ENCODE measurements at regions of chr19 and their contacts with region 1.

Region 1: DNA sequence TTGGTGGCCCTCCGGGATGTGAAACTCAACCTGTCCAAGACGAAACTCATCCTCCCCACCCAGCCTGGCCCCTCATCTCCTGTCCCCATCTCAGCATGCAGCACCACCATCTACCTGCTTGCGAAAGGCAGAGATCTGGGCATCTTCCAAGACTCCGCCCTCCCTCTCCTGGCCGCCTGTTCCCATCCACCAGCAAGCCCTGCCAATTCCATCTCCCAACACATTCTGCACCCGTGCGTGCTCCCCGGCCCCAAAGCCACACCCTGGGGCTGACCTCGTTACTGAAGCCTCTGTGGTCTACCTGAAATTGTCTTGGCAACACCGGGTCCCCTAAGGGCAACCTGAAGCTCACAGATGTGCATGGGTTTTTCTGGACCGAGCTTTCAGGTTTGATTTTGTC is 13.2 kb upstream of the CAMSAP3 start:
- H3K4me3 ChIP-seq: no peak overlapping the region
- H3K27ac ChIP-seq: no peak overlapping the region
- H3K4me1 ChIP-seq: no peaks in the 10 kb centered on the region
- CTCF ChIP-seq: no peak

Region 2: GRCh38 chr19:7318176-7318575 is 264.3 kb before region 1 on chr19:
- CTCF ChIA-PET with region 1: no interaction called
- POLR2A ChIA-PET with region 1: no interaction called
- H3K4me3 ChIP-seq: no peak overlapping the region
- H3K27ac ChIP-seq: no peak overlapping the region
- H3K4me1 ChIP-seq: no peaks in the 10 kb centered on the region
- CTCF ChIP-seq: no peak

Region 3: GRCh38 chr19:7535035-7535992 is 47.1 kb before region 1 on chr19 and contains the start of gene PNPLA6:
- CTCF ChIA-PET with region 1: no interaction called
- POLR2A ChIA-PET with region 1: no interaction called
- H3K4me3 ChIP-seq: peak within 1 kb of the TSS; percentile 82
- H3K27ac ChIP-seq: peak within 1 kb of the TSS; percentile 39; the same call in 1 of the 2 replicates
- H3K4me1 ChIP-seq: no peaks in the 10 kb centered on the region
- CTCF ChIP-seq: peak; percentile 39; the same call in 1 of the 2 replicates

Region 4: DNA sequence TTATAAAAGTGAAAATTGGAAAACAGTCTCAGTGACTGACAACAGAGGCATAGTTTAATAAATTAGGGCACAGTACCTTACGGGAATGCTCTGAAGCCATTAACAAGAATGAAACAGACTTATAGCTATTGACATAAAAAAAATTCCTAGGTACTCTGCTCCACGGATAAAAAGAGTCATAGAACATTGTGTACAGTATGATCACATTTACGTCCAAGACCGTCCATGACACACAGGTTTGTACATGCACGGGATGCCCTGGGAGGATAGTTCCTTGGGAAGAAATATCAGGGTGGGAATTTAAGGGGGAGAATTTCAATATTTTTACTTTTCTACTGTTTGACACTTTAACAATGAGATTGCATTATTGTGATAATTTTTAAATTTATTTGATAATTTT is 11.7 kb before region 1 on chr19:
- CTCF ChIA-PET with region 1: interaction called, 21 read pairs
- POLR2A ChIA-PET with region 1: no interaction called
- H3K4me3 ChIP-seq: no peak overlapping the region
- H3K27ac ChIP-seq: no peak overlapping the region
- H3K4me1 ChIP-seq: no peaks in the 10 kb centered on the region
- CTCF ChIP-seq: no peak

Region 5: GRCh38 chr19:7641288-7642276 is 59.1 kb after region 1 on chr19:
- CTCF ChIA-PET with region 1: no interaction called
- POLR2A ChIA-PET with region 1: no interaction called
- H3K4me3 ChIP-seq: no peak overlapping the region
- H3K27ac ChIP-seq: no peak overlapping the region
- H3K4me1 ChIP-seq: no peaks in the 10 kb centered on the region
- CTCF ChIP-seq: no peak

Measured in HEK293 (cell line).